ENCODE measurements at regions of chr14 and their contacts with region 1.

Region 1: DNA sequence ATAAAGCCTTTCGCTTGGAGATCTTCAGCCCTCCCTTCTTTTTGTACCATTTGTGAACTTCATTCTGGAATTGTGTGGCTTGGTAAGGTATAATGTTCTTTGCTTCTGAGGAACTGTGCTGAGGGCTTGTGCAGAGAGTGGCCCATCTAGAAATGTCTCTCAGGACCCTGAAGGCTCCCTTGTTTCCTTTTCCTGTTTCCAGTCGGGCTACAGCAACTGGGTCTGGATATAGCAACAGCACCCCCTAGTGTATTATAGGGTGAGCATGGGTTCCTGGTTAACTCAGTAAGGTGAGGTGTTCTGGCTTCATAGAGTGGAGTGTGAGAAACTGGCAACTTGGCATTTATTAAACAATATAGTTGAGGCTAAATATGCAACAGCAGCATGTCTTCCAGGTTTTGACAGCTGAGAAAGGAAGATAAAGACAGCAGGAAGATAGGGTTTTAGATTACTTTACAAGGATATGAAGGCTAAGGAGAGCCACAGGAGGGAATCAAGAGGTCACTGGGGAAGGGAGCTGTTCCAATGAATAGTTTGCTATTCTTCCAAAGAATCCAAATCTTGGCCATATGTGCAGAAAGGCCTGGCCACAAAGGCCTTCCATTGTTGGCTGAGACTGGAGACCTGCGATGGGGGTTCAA is 49.1 kb upstream of the RNU6-8 start:
- DNase-seq: no peak
- H3K4me3 ChIP-seq: no peak overlapping the region
- H3K27ac ChIP-seq: peak overlapping the region; percentile 46
- H3K4me1 ChIP-seq: peaks cover 44% of the 10 kb centered on the region
- H3K27me3 ChIP-seq: no peaks in the 10 kb centered on the region
- CTCF ChIP-seq: peak; percentile 89

Region 2: DNA sequence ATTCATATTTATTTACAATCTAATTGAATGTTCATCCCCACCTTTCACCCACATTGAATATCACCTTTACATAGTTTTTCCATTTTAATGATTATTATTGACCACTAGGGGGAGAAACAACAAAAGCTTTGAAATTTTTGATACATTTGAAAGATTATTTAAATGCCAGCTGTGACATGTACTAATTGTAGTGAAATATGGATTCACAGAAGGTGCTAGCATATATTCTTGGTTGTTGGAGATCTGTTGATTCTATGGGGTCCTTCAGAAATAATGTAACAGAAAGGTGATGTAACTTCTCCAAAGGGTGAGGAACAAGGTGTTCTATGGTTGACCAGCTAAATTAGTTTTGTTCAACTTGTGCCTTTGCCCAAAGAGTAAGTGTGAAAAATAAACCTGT is 741.9 kb before region 1 on chr14:
- intact Hi-C with region 1: loop called (anchors 5 kb)
- DNase-seq: no peak
- H3K4me3 ChIP-seq: no peak overlapping the region
- H3K27ac ChIP-seq: no peak overlapping the region
- H3K4me1 ChIP-seq: peaks cover 16% of the 10 kb centered on the region
- H3K27me3 ChIP-seq: no peaks in the 10 kb centered on the region
- CTCF ChIP-seq: peak; percentile 68

Region 3: GRCh38 chr14:31937721-31938346 is 314.3 kb before region 1 on chr14:
- intact Hi-C with region 1: loop called (anchors 10 kb)
- DNase-seq: peak; percentile 26
- H3K4me3 ChIP-seq: no peak overlapping the region
- H3K27ac ChIP-seq: no peak overlapping the region
- H3K4me1 ChIP-seq: peaks cover 38% of the 10 kb centered on the region
- H3K27me3 ChIP-seq: no peaks in the 10 kb centered on the region
- CTCF ChIP-seq: no peak

Region 4: DNA sequence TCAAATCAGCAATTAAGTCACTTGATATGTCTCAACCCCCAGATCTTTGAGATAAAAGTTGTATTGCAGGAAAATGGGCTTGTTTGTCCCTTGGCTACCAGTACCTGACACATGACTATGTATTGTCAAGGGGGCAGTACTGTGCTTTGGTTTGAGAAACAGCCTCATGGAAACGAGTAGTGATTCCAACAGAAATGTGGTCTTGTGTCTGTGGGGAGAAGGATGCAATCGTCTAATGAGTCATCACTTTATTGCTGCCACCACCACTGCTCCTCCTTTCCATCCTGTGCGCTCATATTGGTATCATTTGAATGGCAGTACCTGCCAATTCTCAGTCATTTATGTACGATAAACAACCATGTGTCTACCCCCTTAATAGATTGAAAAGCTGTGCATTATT is 247.8 kb before region 1 on chr14:
- intact Hi-C with region 1: no loop called
- DNase-seq: no peak
- H3K4me3 ChIP-seq: no peak overlapping the region
- H3K27ac ChIP-seq: no peak overlapping the region
- H3K4me1 ChIP-seq: peaks cover 23% of the 10 kb centered on the region
- H3K27me3 ChIP-seq: no peaks in the 10 kb centered on the region
- CTCF ChIP-seq: no peak

Region 5: GRCh38 chr14:32087173-32087861 is 164.8 kb before region 1 on chr14:
- intact Hi-C with region 1: no loop called
- DNase-seq: no peak
- H3K4me3 ChIP-seq: no peak overlapping the region
- H3K27ac ChIP-seq: no peak overlapping the region
- H3K4me1 ChIP-seq: peaks cover 74% of the 10 kb centered on the region
- H3K27me3 ChIP-seq: no peaks in the 10 kb centered on the region
- CTCF ChIP-seq: no peak

Region 6: DNA sequence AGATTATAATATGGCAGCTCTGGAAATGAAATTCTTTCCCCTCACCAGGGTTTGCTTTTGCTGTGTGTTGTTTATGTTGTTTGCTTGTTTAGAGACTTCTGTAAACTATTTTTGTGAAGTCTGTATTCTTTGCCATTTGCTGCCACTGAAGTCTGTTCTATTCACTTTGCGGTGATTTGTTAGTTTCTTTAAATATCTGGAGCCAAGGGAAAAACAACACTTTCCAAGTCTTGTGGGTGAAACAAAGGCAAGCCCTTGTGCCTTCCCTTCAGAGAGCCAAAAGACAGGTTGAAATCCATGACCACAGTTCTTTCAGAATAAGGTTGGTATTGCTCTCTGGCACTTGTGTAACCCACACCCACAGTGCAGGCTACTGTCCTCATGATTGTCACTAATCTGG is 109.8 kb before region 1 on chr14:
- intact Hi-C with region 1: no loop called
- DNase-seq: no peak
- H3K4me3 ChIP-seq: no peak overlapping the region
- H3K27ac ChIP-seq: no peak overlapping the region
- H3K4me1 ChIP-seq: peaks cover 57% of the 10 kb centered on the region
- H3K27me3 ChIP-seq: no peaks in the 10 kb centered on the region
- CTCF ChIP-seq: no peak

Region 7: GRCh38 chr14:33134984-33135383 is 882.8 kb after region 1 on chr14:
- intact Hi-C with region 1: no loop called
- DNase-seq: no peak
- H3K4me3 ChIP-seq: no peak overlapping the region
- H3K27ac ChIP-seq: no peak overlapping the region
- H3K4me1 ChIP-seq: no peaks in the 10 kb centered on the region
- H3K27me3 ChIP-seq: no peaks in the 10 kb centered on the region
- CTCF ChIP-seq: no peak

Measured in left ventricle myocardium inferior (tissue), 1 donor.